Right cardiac atrium (tissue), 5 donors: ENCODE measurements at regions of chr16 and their contacts with region 1.

Region 1: DNA sequence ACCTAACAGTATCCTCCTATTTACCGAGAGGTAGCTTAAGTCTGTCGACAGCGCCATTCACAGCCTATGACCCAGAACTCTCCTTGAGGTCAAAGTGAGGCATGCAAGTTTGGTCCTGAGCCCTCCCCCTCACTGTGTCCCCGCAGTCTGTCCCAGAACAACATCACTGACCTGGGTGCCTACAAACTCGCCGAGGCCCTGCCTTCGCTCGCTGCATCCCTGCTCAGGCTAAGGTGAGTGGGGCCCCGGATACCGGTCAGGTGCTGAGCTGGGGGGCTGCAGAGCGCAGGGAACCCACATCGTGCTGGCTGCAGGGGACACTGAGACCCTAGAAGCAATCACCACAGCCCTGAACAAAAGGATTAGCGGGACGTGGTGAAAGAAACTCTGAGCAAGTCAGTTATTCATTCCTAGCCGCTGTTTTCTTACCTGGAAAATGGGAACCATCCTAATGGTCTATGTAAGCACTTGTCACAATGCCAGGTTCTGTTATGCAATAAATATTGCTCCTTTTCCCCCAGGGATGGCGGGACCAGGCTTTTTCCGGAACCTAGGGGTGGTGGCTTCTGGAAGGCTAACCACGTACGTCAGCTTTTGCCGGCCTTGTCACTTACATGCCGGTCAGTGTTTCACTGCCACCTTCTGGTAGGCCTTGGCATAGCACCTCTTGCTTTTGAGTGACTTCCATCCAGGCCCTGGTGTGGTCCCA is 23.8 kb downstream of the DEXI start:
- DNase-seq: peak; percentile 94 to 98 (median 95)
- ATAC-seq: peak; percentile 78 to 82
- H3K4me3 ChIP-seq: no peak overlapping the region
- H3K27ac ChIP-seq: no peak overlapping the region
- H3K4me1 ChIP-seq: peaks cover 6% of the 10 kb centered on the region
- H3K27me3 ChIP-seq: no peaks in the 10 kb centered on the region

Region 2: DNA sequence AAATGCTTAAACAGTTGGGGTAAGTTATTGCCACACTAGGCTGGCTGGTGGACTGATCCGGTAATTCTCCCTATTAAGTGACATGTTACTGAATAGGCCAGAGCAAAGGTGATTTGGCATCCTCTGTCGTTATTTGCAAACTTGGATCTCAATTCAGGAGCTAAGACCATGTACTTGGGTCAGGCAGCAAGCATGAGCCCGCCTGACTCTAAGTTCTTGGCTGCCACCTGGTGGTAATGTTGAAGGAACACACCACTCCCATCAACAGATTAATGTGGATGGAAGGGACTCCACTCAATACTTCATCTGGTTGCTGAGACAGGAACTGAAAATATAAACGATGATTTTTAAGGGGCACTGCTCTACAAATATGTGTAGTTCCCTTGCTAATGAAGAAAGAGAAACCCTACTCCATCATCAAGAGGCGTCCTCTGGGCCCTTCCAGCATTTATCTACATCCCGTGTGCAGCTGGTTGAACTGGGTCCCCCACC is 408.9 kb before region 1 on chr16:
- intact Hi-C with region 1: loop called in 1 of 4 experiments (anchors 10 kb)
- DNase-seq: peak in 2 of 3 donors; percentile 28 to 58
- ATAC-seq: peak; percentile 89 to 90
- H3K4me3 ChIP-seq: no peak overlapping the region
- H3K27ac ChIP-seq: no peak overlapping the region
- H3K4me1 ChIP-seq: no peaks in the 10 kb centered on the region
- H3K27me3 ChIP-seq: no peaks in the 10 kb centered on the region

Region 3: DNA sequence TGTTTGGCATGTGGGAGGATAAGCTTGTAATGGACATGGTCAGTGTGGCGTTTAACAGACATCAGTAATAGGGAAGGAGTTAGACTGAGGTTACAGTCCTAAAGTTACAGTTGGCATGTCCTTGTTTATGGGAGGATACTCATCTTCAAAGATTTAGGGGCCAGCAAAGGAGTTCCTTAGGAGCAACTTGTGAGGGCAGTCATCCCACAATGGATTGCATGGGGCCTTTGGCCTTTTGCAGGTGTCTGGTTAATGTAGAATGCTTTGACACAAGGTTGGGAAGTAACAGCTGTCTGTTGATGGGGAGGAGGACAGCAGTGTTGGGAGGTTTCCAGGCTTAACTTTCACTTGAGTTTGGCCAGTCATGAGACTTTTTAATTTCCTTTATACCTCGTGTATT is 172.6 kb before region 1 on chr16:
- intact Hi-C with region 1: loop called in 3 of 4 experiments (anchors 5 to 10 kb)
- DNase-seq: no peak
- ATAC-seq: no peak
- H3K4me3 ChIP-seq: no peak overlapping the region
- H3K27ac ChIP-seq: no peak overlapping the region
- H3K4me1 ChIP-seq: peaks cover 6% of the 10 kb centered on the region
- H3K27me3 ChIP-seq: no peaks in the 10 kb centered on the region

Region 4: DNA sequence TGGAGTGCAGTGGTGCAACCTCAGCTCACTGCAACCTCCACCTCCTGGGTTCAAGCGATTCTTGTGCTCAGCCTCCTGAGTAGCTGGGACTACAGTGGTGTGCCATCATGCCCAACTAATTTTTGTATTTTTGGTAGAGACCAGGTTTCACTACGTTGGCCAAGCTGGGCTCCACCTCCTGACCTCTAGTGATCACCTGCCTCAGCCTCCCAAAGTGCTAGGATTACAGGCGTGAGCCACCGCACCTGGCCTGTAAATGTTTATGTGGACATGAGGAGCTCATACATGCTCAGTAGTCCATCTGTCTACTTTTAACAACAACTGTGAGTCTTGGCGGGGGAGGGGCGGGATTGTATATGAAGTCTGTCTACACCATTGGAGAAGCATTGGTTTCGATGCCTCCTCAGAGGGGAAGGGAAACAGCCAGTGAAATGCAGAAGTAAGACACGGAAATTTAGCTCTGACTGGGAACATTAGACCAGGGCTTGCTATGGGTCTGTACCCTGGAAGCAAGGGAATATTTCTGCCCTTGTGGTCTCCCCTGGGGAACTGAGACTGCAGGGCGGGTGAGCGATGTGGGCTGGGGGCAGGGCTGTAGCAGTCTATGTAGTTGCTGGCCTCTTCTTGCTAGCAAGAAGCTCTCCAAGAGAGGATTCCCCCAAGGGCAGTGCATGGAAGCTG is 165.5 kb before region 1 on chr16:
- intact Hi-C with region 1: loop called in 3 of 4 experiments (anchors 5 to 10 kb)
- DNase-seq: peak in 2 of 3 donors; percentile 81 to 89
- ATAC-seq: peak; percentile 40 to 53
- H3K4me3 ChIP-seq: no peak overlapping the region
- H3K27ac ChIP-seq: no peak overlapping the region
- H3K4me1 ChIP-seq: no peaks in the 10 kb centered on the region
- H3K27me3 ChIP-seq: no peaks in the 10 kb centered on the region

Region 5: DNA sequence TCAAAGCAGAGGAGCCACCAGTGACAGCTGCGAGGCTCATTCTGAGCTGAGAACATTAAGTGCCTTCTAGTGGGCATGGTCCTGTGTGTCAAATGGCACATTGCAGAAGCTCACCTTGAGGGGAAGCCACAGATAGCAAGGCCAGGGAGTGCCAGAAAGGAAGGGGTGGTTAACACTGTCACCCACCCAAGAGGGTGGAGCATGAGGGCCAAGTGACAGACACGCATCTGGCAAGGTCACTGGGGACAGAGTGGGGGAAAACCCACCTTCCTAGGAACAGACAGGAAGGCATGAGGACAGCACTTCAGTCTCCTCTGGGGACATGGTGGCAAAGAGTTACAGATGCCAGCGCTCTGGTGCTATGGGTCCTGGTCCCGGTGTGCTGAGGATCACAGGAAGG is 152.7 kb before region 1 on chr16:
- intact Hi-C with region 1: loop called in 1 of 4 experiments (anchors 10 kb)
- DNase-seq: no peak
- ATAC-seq: peak in 1 of 2 donors; percentile 13
- H3K4me3 ChIP-seq: no peak overlapping the region
- H3K27ac ChIP-seq: no peak overlapping the region
- H3K4me1 ChIP-seq: peaks cover 8% of the 10 kb centered on the region
- H3K27me3 ChIP-seq: no peaks in the 10 kb centered on the region

Region 6: GRCh38 chr16:10828851-10829731 is 89.4 kb before region 1 on chr16:
- intact Hi-C with region 1: loop called in 3 of 4 experiments (anchors 5 to 10 kb)
- DNase-seq: peak; percentile 97 to 99 (median 98)
- ATAC-seq: peak; percentile 89 to 91
- H3K4me3 ChIP-seq: no peak overlapping the region
- H3K27ac ChIP-seq: peak overlapping the region; percentile 77
- H3K4me1 ChIP-seq: peaks cover 8% of the 10 kb centered on the region
- H3K27me3 ChIP-seq: no peaks in the 10 kb centered on the region

Region 7: DNA sequence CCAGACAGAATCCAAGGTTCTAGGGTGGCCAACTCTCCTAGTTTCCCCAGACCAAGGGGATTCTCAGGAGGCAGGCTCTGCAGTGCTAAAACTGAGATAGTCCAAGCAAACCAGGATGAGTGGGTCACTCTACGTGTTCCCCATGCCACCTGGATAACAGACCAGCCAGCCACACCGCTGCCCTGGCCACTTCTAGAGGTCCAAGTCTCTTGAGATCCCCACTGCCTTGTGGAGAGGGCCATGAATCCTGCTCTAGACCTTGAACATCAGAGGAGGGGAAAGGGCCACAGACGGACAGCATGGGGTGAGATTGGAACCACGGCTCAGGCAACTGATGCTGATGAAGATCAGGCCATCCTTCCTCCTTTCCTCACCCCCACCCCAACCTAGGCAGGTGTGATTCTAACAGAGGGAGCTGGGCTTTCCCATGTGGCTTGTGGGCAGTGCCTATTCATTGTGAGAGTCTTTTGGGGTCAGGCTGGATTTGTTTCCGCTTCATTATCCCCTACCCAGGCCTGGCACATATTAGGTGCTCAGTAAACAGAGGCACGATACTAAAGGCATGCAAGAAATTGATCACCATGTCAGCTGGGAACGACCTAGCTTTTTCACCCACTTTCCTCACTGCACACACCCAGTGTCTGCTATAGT is 83.0 kb before region 1 on chr16:
- intact Hi-C with region 1: loop called in 2 of 4 experiments (anchors 5 to 10 kb)
- DNase-seq: peak in 1 of 3 donors; percentile 6
- ATAC-seq: no peak
- H3K4me3 ChIP-seq: no peak overlapping the region
- H3K27ac ChIP-seq: no peak overlapping the region
- H3K4me1 ChIP-seq: no peaks in the 10 kb centered on the region
- H3K27me3 ChIP-seq: no peaks in the 10 kb centered on the region